ENCODE measurements at regions of chr1 and their contacts with region 1.

Region 1: GRCh38 chr1:108828022-108828961 is 28.6 kb downstream of the AKNAD1 start:
- DNase-seq: peak; percentile 38 to 59 (median 57)
- H3K4me3 ChIP-seq: no peak overlapping the region
- H3K4me3 Mint-ChIP-seq: no peak overlapping the region
- H3K27ac ChIP-seq: no peak overlapping the region
- H3K27ac Mint-ChIP-seq: no peak overlapping the region
- H3K4me1 ChIP-seq: peaks cover 8% of the 10 kb centered on the region
- H3K4me1 Mint-ChIP-seq: peaks cover 0 to 10% (median 7%) of the 10 kb centered on the region in 4 donors
- H3K27me3 ChIP-seq: no peaks in the 10 kb centered on the region
- H3K27me3 Mint-ChIP-seq: peaks cover 2 to 3% of the 10 kb centered on the region in 2 donors

Region 2: GRCh38 chr1:108533351-108534083 is 294.8 kb before region 1 on chr1:
- CTCF ChIA-PET with region 1: no interaction called
- POLR2A ChIA-PET with region 1: no interaction called
- intact Hi-C with region 1: no loop called
- DNase-seq: no peak
- H3K4me3 ChIP-seq: no peak overlapping the region
- H3K4me3 Mint-ChIP-seq: no peak overlapping the region
- H3K27ac ChIP-seq: no peak overlapping the region
- H3K27ac Mint-ChIP-seq: no peak overlapping the region
- H3K4me1 ChIP-seq: no peaks in the 10 kb centered on the region
- H3K4me1 Mint-ChIP-seq: peaks cover 0 to 3% (median 0%) of the 10 kb centered on the region in 4 donors
- H3K27me3 ChIP-seq: no peaks in the 10 kb centered on the region
- H3K27me3 Mint-ChIP-seq: peaks cover 3 to 7% of the 10 kb centered on the region in 2 donors

Region 3: DNA sequence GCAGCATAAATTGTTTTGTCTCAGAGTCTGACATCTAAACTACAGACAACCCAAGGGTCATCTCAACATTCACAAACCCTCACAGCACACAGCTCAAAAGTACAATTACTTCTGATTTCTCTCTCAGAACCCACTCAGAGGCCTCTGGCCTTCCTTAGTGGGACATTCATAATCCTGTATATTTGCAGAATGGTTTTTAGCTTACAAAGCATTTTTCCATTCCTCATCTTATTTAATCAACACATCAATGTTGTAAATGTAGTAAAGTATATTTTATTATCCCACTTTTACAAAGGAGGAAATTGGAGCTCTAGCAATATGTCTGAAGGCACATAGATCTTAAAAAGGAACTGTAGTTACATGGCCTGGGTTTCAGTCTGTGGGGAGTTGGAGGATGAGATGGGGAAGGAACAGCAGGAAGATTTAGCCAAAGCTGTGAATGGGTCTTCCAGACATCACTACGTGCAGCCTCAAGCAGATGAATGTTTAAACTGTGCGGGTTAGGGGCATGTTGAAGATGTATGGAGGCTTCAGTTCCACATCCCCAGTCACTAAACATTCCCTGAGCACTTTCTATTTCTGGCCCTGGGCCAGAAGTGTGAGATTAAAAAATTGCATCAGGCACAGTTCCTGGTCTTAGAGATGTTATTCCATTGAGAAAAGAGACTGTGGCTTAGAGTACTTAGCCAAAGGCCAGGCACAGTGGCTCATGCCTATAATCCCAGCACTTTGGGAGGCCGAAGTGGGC is 15.3 kb after region 1 on chr1:
- CTCF ChIA-PET with region 1: interaction called, 22 read pairs
- POLR2A ChIA-PET with region 1: no interaction called
- intact Hi-C with region 1: no loop called
- DNase-seq: no peak
- H3K4me3 ChIP-seq: no peak overlapping the region
- H3K4me3 Mint-ChIP-seq: no peak overlapping the region
- H3K27ac ChIP-seq: no peak overlapping the region
- H3K27ac Mint-ChIP-seq: peak overlapping the region in 2 of 7 donors; percentile 9 to 50
- H3K4me1 ChIP-seq: no peaks in the 10 kb centered on the region
- H3K4me1 Mint-ChIP-seq: no peaks in the 10 kb centered on the region
- H3K27me3 ChIP-seq: no peaks in the 10 kb centered on the region
- H3K27me3 Mint-ChIP-seq: no peaks in the 10 kb centered on the region

Region 4: DNA sequence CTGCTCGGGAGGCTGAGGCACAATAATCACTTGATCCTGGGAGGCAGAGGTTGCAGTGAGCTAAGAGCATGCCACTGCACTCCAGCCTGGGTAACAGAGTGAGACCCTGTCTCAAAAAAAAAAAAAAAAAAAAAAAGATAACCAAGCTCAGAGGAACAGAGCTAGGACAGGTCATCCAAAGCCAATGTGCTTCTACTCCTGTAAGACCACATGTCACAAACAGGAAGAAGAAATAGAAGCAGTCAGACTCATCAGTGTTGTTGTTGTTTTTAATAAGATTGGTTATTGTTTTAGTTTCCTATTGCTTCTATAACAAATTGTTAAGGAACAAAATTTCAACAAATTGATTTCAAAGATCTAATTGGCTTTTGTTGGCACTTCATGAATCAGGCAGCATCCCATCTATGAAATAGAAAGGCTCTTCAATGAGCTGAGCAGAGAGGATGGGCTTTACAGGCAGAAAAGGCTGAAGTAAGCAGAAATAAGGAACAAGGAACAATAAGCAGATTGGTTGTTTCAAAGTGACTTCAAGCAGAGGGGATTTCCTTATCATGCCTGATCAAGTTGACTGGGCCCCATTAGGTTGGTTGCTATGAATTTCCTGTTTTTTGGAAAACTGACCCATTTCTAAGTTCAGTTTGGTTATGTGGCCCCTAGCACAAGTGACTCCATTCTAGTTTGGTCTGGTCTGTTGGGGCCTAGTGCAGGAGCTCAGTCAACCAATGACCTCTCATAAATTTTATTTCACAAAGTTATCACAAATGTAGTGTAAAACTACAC is 34.6 kb after region 1 on chr1:
- CTCF ChIA-PET with region 1: interaction called, 11 read pairs
- POLR2A ChIA-PET with region 1: no interaction called
- intact Hi-C with region 1: no loop called
- DNase-seq: no peak
- H3K4me3 ChIP-seq: no peak overlapping the region
- H3K4me3 Mint-ChIP-seq: no peak overlapping the region
- H3K27ac ChIP-seq: no peak overlapping the region
- H3K27ac Mint-ChIP-seq: no peak overlapping the region
- H3K4me1 ChIP-seq: no peaks in the 10 kb centered on the region
- H3K4me1 Mint-ChIP-seq: peaks cover 0 to 2% (median under 1%) of the 10 kb centered on the region in 4 donors
- H3K27me3 ChIP-seq: no peaks in the 10 kb centered on the region
- H3K27me3 Mint-ChIP-seq: peaks cover 8 to 23% of the 10 kb centered on the region in 2 donors

Region 5: DNA sequence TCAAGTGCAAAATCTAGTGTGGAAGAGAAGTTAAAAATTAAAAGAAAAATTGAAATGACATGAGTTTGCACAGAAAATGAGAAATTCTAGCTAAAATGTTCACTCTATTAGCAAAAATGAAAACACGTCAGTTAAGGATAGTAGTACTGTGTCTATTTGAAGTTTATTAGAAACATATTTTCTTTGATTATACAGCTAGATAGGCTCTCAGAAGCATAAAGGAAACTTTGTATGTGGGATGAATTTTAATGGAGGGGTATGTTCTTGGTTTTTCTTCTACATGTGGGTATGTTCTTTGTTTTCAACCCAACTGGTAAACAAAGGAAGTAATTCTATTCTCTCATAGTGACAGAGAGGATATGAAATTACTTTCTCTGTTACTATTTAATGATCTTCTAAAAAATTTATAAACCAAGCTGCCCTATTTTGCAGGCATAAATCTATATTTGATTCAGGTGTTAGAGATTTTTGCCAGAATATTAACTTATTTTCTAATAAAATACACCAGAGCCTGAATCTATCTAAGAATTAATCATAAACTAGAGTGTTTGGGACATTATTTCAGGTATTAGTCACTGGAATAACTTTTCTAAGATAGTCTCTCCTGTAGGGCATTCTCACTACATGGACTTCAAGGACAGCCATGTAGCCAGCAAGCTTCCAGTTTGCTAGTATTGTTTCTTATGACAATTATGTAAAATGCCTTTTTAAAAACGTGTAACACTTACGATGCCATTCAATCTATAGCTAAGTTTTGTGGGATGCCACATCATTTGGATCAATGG is 64.3 kb after region 1 on chr1:
- CTCF ChIA-PET with region 1: interaction called, 238 read pairs
- POLR2A ChIA-PET with region 1: no interaction called
- intact Hi-C with region 1: no loop called
- DNase-seq: no peak
- H3K4me3 ChIP-seq: no peak overlapping the region
- H3K4me3 Mint-ChIP-seq: no peak overlapping the region
- H3K27ac ChIP-seq: no peak overlapping the region
- H3K27ac Mint-ChIP-seq: no peak overlapping the region
- H3K4me1 ChIP-seq: no peaks in the 10 kb centered on the region
- H3K4me1 Mint-ChIP-seq: no peaks in the 10 kb centered on the region
- H3K27me3 ChIP-seq: no peaks in the 10 kb centered on the region
- H3K27me3 Mint-ChIP-seq: no peaks in the 10 kb centered on the region

Region 6: DNA sequence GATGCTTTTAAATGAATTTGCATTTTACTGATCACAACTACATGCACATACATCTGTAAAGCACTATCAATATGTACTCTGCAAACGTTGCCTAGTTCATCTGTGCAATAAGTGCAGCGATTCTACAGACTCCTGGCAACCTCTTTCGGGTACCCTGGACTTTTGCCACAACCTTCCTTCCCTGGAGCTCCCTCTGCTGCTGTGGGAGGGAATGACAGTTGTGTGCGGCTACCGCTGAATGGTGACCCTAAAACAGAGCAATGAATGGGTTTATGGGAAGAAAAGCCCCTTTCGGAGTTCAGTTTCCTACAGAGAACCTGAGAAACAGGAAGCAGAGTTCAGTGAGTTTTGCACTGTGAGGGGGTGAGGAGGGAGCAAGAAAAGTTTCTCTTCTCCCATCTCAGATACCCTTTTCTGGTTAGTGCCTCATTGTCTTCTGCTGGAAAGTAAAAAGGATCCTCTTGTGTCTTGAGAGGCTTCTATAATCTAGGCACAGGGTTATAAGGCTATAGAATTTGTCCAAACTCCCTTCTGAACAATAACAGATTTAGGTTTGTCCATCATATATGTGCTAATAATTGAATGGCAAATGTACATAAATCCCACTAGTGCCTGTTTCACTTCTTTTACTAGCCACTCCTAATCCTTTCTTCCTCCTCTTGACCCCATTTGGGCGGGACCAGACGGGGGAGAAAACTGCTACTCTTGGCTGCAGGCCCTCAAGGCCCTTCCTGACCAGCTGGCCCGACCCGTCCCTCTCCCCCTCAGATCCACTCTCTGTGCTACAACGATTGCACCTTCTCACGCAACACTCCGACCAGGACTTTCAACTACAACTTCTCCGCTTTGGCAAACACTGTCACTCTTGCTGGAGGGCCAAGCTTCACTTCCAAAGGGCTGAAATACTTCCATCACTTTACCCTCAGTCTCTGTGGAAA is 365.6 kb after region 1 on chr1:
- CTCF ChIA-PET with region 1: interaction called, 4 read pairs
- POLR2A ChIA-PET with region 1: no interaction called
- intact Hi-C with region 1: loop called (anchors 2 kb)
- DNase-seq: peak in 4 of 5 donors; percentile 17 to 32 (median 26)
- H3K4me3 ChIP-seq: no peak overlapping the region
- H3K4me3 Mint-ChIP-seq: no peak overlapping the region
- H3K27ac ChIP-seq: no peak overlapping the region
- H3K27ac Mint-ChIP-seq: peak overlapping the region in 1 of 7 donors; percentile 55
- H3K4me1 ChIP-seq: no peaks in the 10 kb centered on the region
- H3K4me1 Mint-ChIP-seq: peaks cover 0 to 4% (median under 1%) of the 10 kb centered on the region in 4 donors
- H3K27me3 ChIP-seq: no peaks in the 10 kb centered on the region
- H3K27me3 Mint-ChIP-seq: no peaks in the 10 kb centered on the region

Measured in CD4-positive, alpha-beta memory T cell (primary cell).